G401 (cell line): ENCODE measurements at regions of chr1 and their contacts with region 1.

Region 1: GRCh38 chr1:75188892-75189291 is 54.7 kb downstream of the LHX8 start:
- DNase-seq: no peak

Region 2: DNA sequence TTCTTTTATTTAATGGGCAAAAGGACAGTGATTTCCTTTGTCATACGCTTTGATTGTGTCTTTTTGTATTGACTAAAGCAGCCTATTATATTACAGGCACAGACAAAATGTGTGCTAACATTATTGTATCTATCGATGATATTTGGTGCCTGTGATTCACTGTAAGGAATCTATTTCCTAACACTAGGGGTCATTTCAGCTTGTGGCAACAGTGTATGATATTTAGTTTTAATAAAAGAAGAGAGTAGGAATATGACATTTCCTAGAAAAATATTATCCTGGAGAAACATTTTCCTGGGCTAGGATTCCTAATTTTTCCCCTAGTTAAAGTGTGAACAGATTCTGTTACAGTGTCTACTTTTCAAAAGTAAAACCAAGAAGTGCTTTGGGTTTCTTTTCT is 413.2 kb before region 1 on chr1:
- in situ Hi-C with region 1: loop called (anchors 25 kb)
- DNase-seq: no peak